Tibial artery (tissue), 4 donors: ENCODE measurements at regions of chr13 and their contacts with region 1.

Region 1: GRCh38 chr13:92303428-92303827 is 905.0 kb downstream of the GPC5 start:
- DNase-seq: no peak
- H3K4me3 ChIP-seq: no peak overlapping the region
- H3K27ac ChIP-seq: no peak overlapping the region
- H3K4me1 ChIP-seq: no peaks in the 10 kb centered on the region
- H3K27me3 ChIP-seq: no peaks in the 10 kb centered on the region
- CTCF ChIP-seq: no peak

Region 2: GRCh38 chr13:92317066-92317465 is 13.6 kb after region 1 on chr13:
- intact Hi-C with region 1: loop called (anchors 1 kb)
- DNase-seq: no peak
- H3K4me3 ChIP-seq: no peak overlapping the region
- H3K27ac ChIP-seq: no peak overlapping the region
- H3K4me1 ChIP-seq: no peaks in the 10 kb centered on the region
- H3K27me3 ChIP-seq: no peaks in the 10 kb centered on the region
- CTCF ChIP-seq: no peak